SK-N-SH (cell line): ENCODE measurements at regions of chr19 and their contacts with region 1.

Region 1: GRCh38 chr19:48582168-48582567 is 24.4 kb upstream of the SPACA4 start:
- DNase-seq: no peak
- H3K4me3 ChIP-seq: no peak overlapping the region
- H3K27ac ChIP-seq: no peak overlapping the region
- H3K4me1 ChIP-seq: no peaks in the 10 kb centered on the region; a peak in 1 of 4 replicates
- H3K27me3 ChIP-seq: no peaks in the 10 kb centered on the region
- CTCF ChIP-seq: no peak
- EP300 ChIP-seq: no peak
- RAD21 ChIP-seq: no peak

Region 2: GRCh38 chr19:48568345-48568886 is 13.8 kb before region 1 on chr19:
- CTCF ChIA-PET with region 1: interaction called, 19 read pairs
- POLR2A ChIA-PET with region 1: no interaction called
- DNase-seq: peak; percentile 68
- H3K4me3 ChIP-seq: no peak overlapping the region
- H3K27ac ChIP-seq: peak overlapping the region; percentile 45 to 98; a peak in 3 of 4 replicates
- H3K4me1 ChIP-seq: peaks cover 7 to 13% of the 10 kb centered on the region in 2 experiments; a peak in 3 of 4 replicates
- H3K27me3 ChIP-seq: no peaks in the 10 kb centered on the region
- CTCF ChIP-seq: no peak
- EP300 ChIP-seq: peak in 1 of 2 experiments; percentile 57; a peak in 1 of 4 replicates
- RAD21 ChIP-seq: no peak